Activated CD8-positive, alpha-beta T cell treated with anti-CD3 and anti-CD28 coated beads for 36 hours (primary cell): ENCODE measurements at regions of chr12 and their contacts with region 1.

Region 1: GRCh38 chr12:92987362-92987761 is 58.3 kb upstream of the EEA1 start:
- DNase-seq: peak; percentile 14
- ATAC-seq: no peak
- H3K4me3 Mint-ChIP-seq: no peak overlapping the region
- H3K27ac Mint-ChIP-seq: peak overlapping the region; percentile 78
- H3K4me1 Mint-ChIP-seq: peaks cover 37% of the 10 kb centered on the region
- H3K27me3 Mint-ChIP-seq: peaks cover 1% of the 10 kb centered on the region
- CTCF ChIP-seq: peak; percentile 81

Region 2: DNA sequence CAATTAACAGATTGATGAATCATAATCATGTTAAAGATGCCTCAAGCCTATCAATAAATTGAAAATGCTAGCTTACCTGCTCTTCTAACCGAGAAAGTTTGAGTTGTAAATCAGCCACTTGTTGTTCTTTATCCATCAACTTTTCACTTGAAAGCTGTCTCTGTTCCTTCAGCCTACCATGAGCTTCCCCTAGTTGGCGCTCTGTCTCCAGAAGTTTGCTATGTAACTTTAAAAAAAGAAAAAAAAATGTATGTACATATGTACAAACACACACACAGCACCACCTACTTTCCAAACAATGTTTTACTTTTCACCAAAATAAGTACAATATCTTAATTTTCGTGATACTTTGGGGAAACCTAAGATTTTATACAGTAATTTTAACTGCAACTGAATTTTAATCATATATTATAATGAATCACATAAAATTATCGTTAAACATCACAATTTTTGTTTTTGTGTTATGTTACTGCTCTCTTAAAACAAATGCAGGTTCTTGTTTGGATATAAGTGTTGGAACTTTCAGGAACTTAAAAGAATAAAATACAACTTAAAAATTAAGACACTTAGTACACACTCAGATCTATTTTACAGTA is 159.4 kb before region 1 on chr12:
- CTCF ChIA-PET with region 1: interaction called, 11 read pairs
- POLR2A ChIA-PET with region 1: interaction called, 3 read pairs
- intact Hi-C with region 1: no loop called
- DNase-seq: peak; percentile 60
- ATAC-seq: no peak
- H3K4me3 Mint-ChIP-seq: no peak overlapping the region
- H3K27ac Mint-ChIP-seq: no peak overlapping the region
- H3K4me1 Mint-ChIP-seq: no peaks in the 10 kb centered on the region
- H3K27me3 Mint-ChIP-seq: no peaks in the 10 kb centered on the region
- CTCF ChIP-seq: peak; percentile 51

Region 3: GRCh38 chr12:93008044-93008778 is 20.8 kb after region 1 on chr12:
- CTCF ChIA-PET with region 1: interaction called, 28 read pairs
- POLR2A ChIA-PET with region 1: interaction called, 3 read pairs
- intact Hi-C with region 1: no loop called
- DNase-seq: no peak
- ATAC-seq: peak; percentile 24
- H3K4me3 Mint-ChIP-seq: no peak overlapping the region
- H3K27ac Mint-ChIP-seq: no peak overlapping the region
- H3K4me1 Mint-ChIP-seq: peaks cover 5% of the 10 kb centered on the region
- H3K27me3 Mint-ChIP-seq: no peaks in the 10 kb centered on the region
- CTCF ChIP-seq: no peak

Region 4: DNA sequence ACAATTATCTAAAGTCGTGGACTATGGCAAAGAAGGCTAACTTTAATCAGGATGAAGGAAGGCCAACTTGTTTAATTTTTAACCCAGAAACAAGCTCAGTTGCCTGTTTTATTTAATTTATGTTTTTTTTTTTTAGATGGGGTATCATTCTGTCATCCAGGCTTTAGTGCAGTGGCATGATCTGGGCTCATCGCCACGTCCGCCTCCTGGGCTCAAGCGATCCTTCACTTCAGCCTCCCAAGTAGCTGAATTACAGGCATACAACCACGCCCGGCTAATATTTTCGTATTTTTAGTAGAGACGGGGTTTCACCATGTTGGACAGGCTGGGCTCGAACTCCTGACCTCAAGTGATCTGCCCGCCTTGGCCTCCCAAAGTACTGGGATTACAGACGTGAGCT is 410.1 kb after region 1 on chr12:
- CTCF ChIA-PET with region 1: interaction called, 28 read pairs
- POLR2A ChIA-PET with region 1: interaction called, 3 read pairs
- intact Hi-C with region 1: loop called (anchors 5 kb)
- DNase-seq: no peak
- ATAC-seq: no peak
- H3K4me3 Mint-ChIP-seq: no peak overlapping the region
- H3K27ac Mint-ChIP-seq: no peak overlapping the region
- H3K4me1 Mint-ChIP-seq: peaks cover 7% of the 10 kb centered on the region
- H3K27me3 Mint-ChIP-seq: no peaks in the 10 kb centered on the region
- CTCF ChIP-seq: no peak